ENCODE measurements at regions of chr11 and their contacts with region 1.

Region 1: GRCh38 chr11:34174412-34175041 is 69.1 kb downstream of the NAT10 start:
- DNase-seq: no peak
- H3K4me3 ChIP-seq: peak overlapping the region; percentile 15 to 27
- H3K27ac ChIP-seq: peak overlapping the region; percentile 54
- H3K4me1 ChIP-seq: peaks cover 28% of the 10 kb centered on the region
- H3K27me3 ChIP-seq: no peaks in the 10 kb centered on the region
- CTCF ChIP-seq: peak; percentile 90 to 97 (median 95)
- POLR2A ChIP-seq: no peak

Region 2: DNA sequence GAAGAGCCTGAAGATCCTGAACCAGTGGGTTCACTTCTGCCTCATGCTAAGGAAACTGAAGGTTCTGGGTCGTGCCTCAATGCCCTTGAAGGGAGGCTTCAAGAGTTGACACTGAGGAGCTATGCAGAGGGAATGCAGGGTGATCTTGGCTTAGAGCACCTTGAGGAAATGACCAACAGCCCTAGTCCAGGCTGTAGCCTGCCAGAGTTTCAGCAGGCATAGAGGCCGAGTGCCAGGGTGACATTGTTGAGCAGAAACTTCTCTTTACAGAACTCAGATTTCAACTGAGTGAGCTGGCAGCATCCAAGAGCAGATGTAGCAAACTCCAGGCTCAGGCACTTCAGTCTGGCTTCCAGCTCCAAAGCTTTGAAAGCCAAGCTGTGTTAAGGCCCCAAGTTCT is 146.1 kb before region 1 on chr11:
- intact Hi-C with region 1: no loop called
- DNase-seq: no peak
- H3K4me3 ChIP-seq: no peak overlapping the region
- H3K27ac ChIP-seq: no peak overlapping the region
- H3K4me1 ChIP-seq: peaks cover 6% of the 10 kb centered on the region
- H3K27me3 ChIP-seq: no peaks in the 10 kb centered on the region
- CTCF ChIP-seq: no peak
- POLR2A ChIP-seq: no peak

Region 3: GRCh38 chr11:34449013-34449412 is 274.5 kb after region 1 on chr11:
- intact Hi-C with region 1: loop called (anchors 10 kb)
- DNase-seq: no peak
- H3K4me3 ChIP-seq: no peak overlapping the region
- H3K27ac ChIP-seq: no peak overlapping the region
- H3K4me1 ChIP-seq: peaks cover 23% of the 10 kb centered on the region
- H3K27me3 ChIP-seq: no peaks in the 10 kb centered on the region
- CTCF ChIP-seq: no peak
- POLR2A ChIP-seq: no peak

Measured in vagina (tissue), 2 donors.